ENCODE measurements at regions of chr15 and their contacts with region 1.

Region 1: DNA sequence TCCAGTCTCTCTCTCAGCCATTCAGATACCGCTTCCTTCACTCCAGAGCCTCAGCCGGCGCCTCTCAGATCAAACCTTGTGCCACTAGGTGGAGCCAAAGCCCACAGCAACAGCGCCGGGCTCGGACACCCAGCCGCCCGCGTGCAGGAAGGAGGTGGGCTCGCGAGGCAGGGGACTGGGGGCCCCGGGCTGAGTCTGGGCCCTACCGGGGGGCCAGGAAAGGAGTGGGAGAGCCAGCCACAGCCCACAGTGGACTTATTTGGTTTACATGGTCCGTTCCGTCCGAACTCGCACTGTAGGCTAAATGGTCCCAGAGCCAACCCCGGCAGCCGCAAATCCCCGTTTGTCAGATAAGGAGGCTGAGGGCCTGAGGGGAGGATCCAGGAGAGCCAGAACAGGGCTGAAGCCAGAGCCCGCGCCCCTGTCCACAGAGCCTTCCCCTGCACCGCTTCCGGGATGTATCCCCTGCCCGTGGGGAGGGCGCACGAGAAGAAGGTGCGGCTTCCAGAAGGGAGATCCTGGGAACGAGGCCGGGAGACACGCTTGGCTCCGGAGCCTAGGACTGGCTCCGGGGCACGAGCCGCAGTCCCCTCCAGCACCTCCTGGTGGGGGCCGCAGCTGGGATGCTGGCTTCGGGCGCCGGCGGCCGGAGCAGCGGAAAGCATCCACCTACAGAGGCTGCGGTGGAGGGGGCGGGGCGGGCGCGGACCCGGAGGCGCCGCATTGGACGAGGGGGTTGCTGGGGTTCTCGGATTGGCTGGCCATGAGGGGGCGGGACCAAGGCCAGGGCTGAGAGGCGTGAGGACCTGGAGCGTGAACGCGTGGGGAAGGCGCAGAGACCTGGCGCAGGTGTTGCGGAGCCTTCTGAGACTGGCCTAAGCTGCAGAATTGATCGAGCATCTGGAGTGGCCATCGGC is 6.5 kb upstream of the CYP11A1 start:
- DNase-seq: peak; percentile 97
- H3K4me3 Mint-ChIP-seq: peak overlapping the region; percentile 75
- H3K27ac Mint-ChIP-seq: no peak overlapping the region
- H3K4me1 Mint-ChIP-seq: peaks cover 31% of the 10 kb centered on the region
- H3K27me3 Mint-ChIP-seq: peaks cover 1% of the 10 kb centered on the region

Region 2: GRCh38 chr15:74362480-74362879 is 11.5 kb before region 1 on chr15:
- CTCF ChIA-PET with region 1: interaction called, 12 read pairs
- intact Hi-C with region 1: no loop called
- DNase-seq: no peak
- H3K4me3 Mint-ChIP-seq: no peak overlapping the region
- H3K27ac Mint-ChIP-seq: no peak overlapping the region
- H3K4me1 Mint-ChIP-seq: peaks cover 3% of the 10 kb centered on the region
- H3K27me3 Mint-ChIP-seq: peaks cover 22% of the 10 kb centered on the region

Region 3: GRCh38 chr15:74438721-74439316 is 64.8 kb after region 1 on chr15:
- CTCF ChIA-PET with region 1: interaction called, 399 read pairs
- intact Hi-C with region 1: loop called (anchors 1 kb)
- DNase-seq: peak; percentile 88
- H3K4me3 Mint-ChIP-seq: no peak overlapping the region
- H3K27ac Mint-ChIP-seq: peak overlapping the region; percentile 14
- H3K4me1 Mint-ChIP-seq: peaks cover 35% of the 10 kb centered on the region
- H3K27me3 Mint-ChIP-seq: no peaks in the 10 kb centered on the region

Region 4: GRCh38 chr15:74620636-74621545 is 246.9 kb after region 1 on chr15:
- CTCF ChIA-PET with region 1: interaction called, 8 read pairs
- intact Hi-C with region 1: loop called (anchors 2 kb)
- DNase-seq: peak; percentile 88
- H3K4me3 Mint-ChIP-seq: no peak overlapping the region
- H3K27ac Mint-ChIP-seq: peak overlapping the region; percentile 79
- H3K4me1 Mint-ChIP-seq: peaks cover 53% of the 10 kb centered on the region
- H3K27me3 Mint-ChIP-seq: no peaks in the 10 kb centered on the region

Region 5: GRCh38 chr15:74692327-74692726 is 318.3 kb after region 1 on chr15:
- CTCF ChIA-PET with region 1: no interaction called
- intact Hi-C with region 1: no loop called
- DNase-seq: no peak
- H3K4me3 Mint-ChIP-seq: no peak overlapping the region
- H3K27ac Mint-ChIP-seq: no peak overlapping the region
- H3K4me1 Mint-ChIP-seq: peaks cover 44% of the 10 kb centered on the region
- H3K27me3 Mint-ChIP-seq: no peaks in the 10 kb centered on the region

Region 6: GRCh38 chr15:74950078-74951000 is 576.4 kb after region 1 on chr15:
- CTCF ChIA-PET with region 1: no interaction called
- intact Hi-C with region 1: loop called (anchors 2 kb)
- DNase-seq: peak; percentile 92
- H3K4me3 Mint-ChIP-seq: no peak overlapping the region
- H3K27ac Mint-ChIP-seq: no peak overlapping the region
- H3K4me1 Mint-ChIP-seq: peaks cover 10% of the 10 kb centered on the region
- H3K27me3 Mint-ChIP-seq: no peaks in the 10 kb centered on the region

Measured in activated naive CD4-positive, alpha-beta T cell treated with anti-CD3 and anti-CD28 coated beads for 36 hours (primary cell).